HepG2 (cell line): ENCODE measurements at regions of chr17 and their contacts with region 1.

Region 1: GRCh38 chr17:5800675-5801074 is 216.4 kb upstream of the NLRP1 start:
- DNase-seq: no peak
- ATAC-seq: no peak
- H3K4me3 ChIP-seq: no peak overlapping the region
- H3K27ac ChIP-seq: no peak overlapping the region
- H3K4me1 ChIP-seq: no peaks in the 10 kb centered on the region
- H3K27me3 ChIP-seq: no peaks in the 10 kb centered on the region; a peak in 1 of 5 replicates
- CTCF ChIP-seq: no peak
- EP300 ChIP-seq: no peak
- POLR2A ChIP-seq: no peak
- RAD21 ChIP-seq: no peak

Region 2: GRCh38 chr17:5706577-5707216 is 94.0 kb before region 1 on chr17:
- CTCF ChIA-PET with region 1: interaction called, 5 read pairs
- POLR2A ChIA-PET with region 1: no interaction called
- in situ Hi-C with region 1: no loop called
- intact Hi-C with region 1: loop called (anchors 2 kb)
- DNase-seq: peak; percentile 35
- ATAC-seq: peak; percentile 79
- H3K4me3 ChIP-seq: no peak overlapping the region
- H3K27ac ChIP-seq: no peak overlapping the region
- H3K4me1 ChIP-seq: no peaks in the 10 kb centered on the region
- H3K27me3 ChIP-seq: no peaks in the 10 kb centered on the region
- CTCF ChIP-seq: peak; percentile 79
- EP300 ChIP-seq: no peak
- POLR2A ChIP-seq: no peak
- RAD21 ChIP-seq: no peak